ENCODE measurements at regions of chr4 and their contacts with region 1.

Region 1: GRCh38 chr4:13654158-13654797 is 26.8 kb upstream of the BOD1L1 start:
- DNase-seq: peak; percentile 86
- ATAC-seq: peak; percentile 97
- H3K4me3 Mint-ChIP-seq: peak overlapping the region; percentile 72
- H3K27ac Mint-ChIP-seq: no peak overlapping the region
- H3K4me1 Mint-ChIP-seq: peaks cover 7% of the 10 kb centered on the region
- H3K27me3 Mint-ChIP-seq: peaks cover 12% of the 10 kb centered on the region

Region 2: DNA sequence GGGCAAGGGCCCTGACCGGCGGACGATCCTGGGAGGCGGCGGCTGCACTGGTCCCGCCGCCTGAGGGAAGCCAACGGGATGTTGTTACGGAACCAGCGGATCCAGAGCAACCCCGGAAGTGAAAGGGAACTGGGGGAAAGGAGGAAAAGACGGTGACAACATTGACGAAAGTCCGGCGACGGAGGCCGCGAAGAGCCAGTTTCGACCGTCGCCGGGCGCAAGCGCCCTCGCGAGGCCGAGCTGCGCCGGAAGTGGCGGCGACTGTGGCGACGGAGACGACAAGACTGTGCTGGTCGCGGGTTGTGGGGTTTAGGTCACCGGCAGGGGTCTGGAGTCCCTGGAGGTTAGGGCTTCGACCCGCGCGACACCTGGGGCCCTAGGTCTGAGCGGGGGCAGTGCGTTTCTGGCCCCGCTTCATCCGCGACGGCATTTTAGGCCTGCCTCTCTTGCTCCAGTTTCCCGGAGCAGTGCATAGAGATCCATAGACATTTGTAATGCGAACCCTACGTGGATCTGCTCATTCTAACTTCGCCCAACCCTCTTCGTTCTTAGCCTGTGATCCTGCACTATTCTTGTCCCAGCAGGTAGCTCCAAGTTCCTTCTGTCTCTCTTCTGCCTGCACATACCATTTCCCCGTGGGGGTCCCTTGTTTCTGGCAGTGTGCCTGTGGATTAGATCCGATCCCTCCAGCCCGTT is 26.5 kb before region 1 on chr4 and contains the start of gene BOD1L1:
- CTCF ChIA-PET with region 1: interaction called, 34 read pairs
- POLR2A ChIA-PET with region 1: interaction called, 5 read pairs
- DNase-seq: peak; percentile 84
- ATAC-seq: peak; percentile 82
- H3K4me3 Mint-ChIP-seq: peak within 1 kb of the TSS; percentile 86
- H3K27ac Mint-ChIP-seq: peak within 1 kb of the TSS; percentile 92
- H3K4me1 Mint-ChIP-seq: peaks cover 28% of the 10 kb centered on the region
- H3K27me3 Mint-ChIP-seq: no peaks in the 10 kb centered on the region
- total RNA-seq, gene BOD1L1: 29.7 to 30.2 TPM

Region 3: GRCh38 chr4:13640149-13640940 is 13.9 kb before region 1 on chr4:
- CTCF ChIA-PET with region 1: interaction called, 26 read pairs
- POLR2A ChIA-PET with region 1: no interaction called
- DNase-seq: no peak
- ATAC-seq: no peak
- H3K4me3 Mint-ChIP-seq: no peak overlapping the region
- H3K27ac Mint-ChIP-seq: no peak overlapping the region
- H3K4me1 Mint-ChIP-seq: no peaks in the 10 kb centered on the region
- H3K27me3 Mint-ChIP-seq: peaks cover 25% of the 10 kb centered on the region